ENCODE measurements at regions of chr5 and their contacts with region 1.

Region 1: GRCh38 chr5:131364507-131365050 is 100.7 kb downstream of the CDC42SE2 start:
- DNase-seq: no peak
- ATAC-seq: peak; percentile 96
- H3K4me3 Mint-ChIP-seq: peak overlapping the region; percentile 41
- H3K27ac Mint-ChIP-seq: peak overlapping the region; percentile 83
- H3K4me1 Mint-ChIP-seq: peaks cover 54% of the 10 kb centered on the region
- H3K27me3 Mint-ChIP-seq: no peaks in the 10 kb centered on the region

Region 2: DNA sequence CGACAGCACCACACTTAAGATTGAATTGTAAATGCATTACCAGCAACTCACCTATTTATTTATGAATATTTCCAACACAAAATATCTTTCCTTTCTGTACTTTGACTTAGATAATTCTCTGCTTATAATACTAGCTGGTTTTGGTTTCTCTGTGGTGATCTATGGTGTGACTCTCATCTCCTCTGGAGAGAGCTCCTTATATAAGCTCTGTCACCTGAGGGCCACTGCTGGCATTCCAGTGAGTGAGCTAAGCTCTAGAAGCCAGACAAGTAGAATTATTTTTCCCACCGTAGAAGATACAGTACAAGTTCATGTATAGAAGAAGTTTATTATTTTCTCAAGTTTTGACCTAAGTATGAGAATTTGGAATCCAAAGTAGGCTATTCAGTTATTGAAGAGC is 10.8 kb after region 1 on chr5:
- POLR2A ChIA-PET with region 1: interaction called, 14 read pairs
- DNase-seq: no peak
- ATAC-seq: peak; percentile 32
- H3K4me3 Mint-ChIP-seq: peak overlapping the region; percentile 36
- H3K27ac Mint-ChIP-seq: peak overlapping the region; percentile 80
- H3K4me1 Mint-ChIP-seq: peaks cover 55% of the 10 kb centered on the region
- H3K27me3 Mint-ChIP-seq: no peaks in the 10 kb centered on the region

Region 3: GRCh38 chr5:131481569-131481968 is 117.0 kb after region 1 on chr5:
- POLR2A ChIA-PET with region 1: no interaction called
- DNase-seq: no peak
- ATAC-seq: peak; percentile 71
- H3K4me3 Mint-ChIP-seq: peak overlapping the region; percentile 45
- H3K27ac Mint-ChIP-seq: no peak overlapping the region
- H3K4me1 Mint-ChIP-seq: peaks cover 25% of the 10 kb centered on the region
- H3K27me3 Mint-ChIP-seq: no peaks in the 10 kb centered on the region

Region 4: DNA sequence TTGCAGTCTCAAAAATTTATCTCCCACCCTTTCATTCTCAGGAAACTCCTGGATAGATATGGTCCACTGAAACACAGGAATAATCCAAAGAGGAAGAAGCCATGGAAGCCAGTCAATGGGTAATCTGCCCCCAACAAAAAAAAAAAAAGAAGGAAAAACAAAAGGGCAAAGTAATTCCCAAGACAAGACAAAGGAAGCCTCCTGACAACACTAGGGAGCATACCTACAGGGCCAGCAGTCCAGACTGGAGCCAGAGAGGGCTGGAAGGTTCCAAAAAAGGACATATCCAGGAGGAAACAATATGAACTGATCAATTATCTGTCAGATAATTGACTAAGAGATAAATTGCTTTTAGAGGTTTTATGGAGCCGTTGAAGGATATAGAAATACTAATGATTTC is 419.3 kb after region 1 on chr5:
- POLR2A ChIA-PET with region 1: no interaction called
- DNase-seq: no peak
- ATAC-seq: no peak
- H3K4me3 Mint-ChIP-seq: no peak overlapping the region
- H3K27ac Mint-ChIP-seq: no peak overlapping the region
- H3K4me1 Mint-ChIP-seq: peaks cover 16% of the 10 kb centered on the region
- H3K27me3 Mint-ChIP-seq: no peaks in the 10 kb centered on the region

Measured in activated naive CD8-positive, alpha-beta T cell treated with anti-CD3 and anti-CD28 coated beads, Interleukin-2, amount 10 ng/mL, durations not matched to agents 7 days and 5 days (primary cell).